ENCODE measurements at regions of chr3 and their contacts with region 1.

Region 1: GRCh38 chr3:10738688-10739372 is 77.2 kb upstream of the SLC6A11 start:
- DNase-seq: peak; percentile 64
- H3K4me3 ChIP-seq: no peak overlapping the region
- H3K27ac ChIP-seq: no peak overlapping the region
- H3K4me1 ChIP-seq: no peaks in the 10 kb centered on the region
- H3K27me3 ChIP-seq: no peaks in the 10 kb centered on the region
- CTCF ChIP-seq: peak; percentile 87

Region 2: DNA sequence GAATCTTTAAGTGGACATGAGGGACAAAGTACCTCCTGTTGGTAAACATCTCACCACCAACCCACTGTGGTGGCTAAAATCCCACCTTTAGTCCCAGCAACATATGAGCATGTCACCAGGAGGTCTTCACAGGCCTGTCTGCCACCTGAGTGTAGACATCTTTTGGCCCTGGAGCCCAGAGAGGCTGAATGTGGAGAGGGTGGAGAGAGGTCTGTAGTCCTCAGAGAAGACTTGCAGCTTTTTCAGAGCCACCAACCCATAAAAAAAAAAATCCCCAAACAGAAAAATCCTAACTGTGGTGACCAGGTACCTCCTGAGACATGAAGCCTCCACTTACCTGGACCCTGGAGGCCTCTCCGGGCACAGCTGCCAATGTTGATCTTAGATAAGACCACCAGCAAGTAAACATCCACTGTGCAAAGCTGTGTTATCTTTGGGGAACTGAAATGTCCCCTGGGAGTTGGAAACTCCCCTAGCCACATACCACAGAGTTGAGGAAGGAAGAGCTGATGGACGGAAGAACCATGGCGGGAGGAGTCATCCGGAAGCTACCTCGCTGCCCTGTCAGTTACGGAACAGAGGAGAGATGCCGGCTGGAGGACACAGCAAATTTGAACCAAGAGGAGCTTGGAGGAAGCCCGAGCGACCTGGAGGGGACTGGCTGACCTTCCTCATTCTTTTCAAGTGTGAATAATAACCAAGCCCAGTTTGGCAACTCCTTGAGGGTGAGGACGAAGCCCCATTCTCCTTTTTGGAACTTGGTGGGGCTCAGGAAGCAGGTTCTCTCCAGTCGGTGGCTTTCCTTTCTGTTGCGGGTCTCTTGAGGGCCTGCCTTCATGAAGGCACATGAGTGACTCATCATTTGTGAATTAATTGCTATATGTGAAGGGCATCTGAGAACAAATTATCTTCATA is 446.1 kb before region 1 on chr3 and contains the start of gene GHRL:
- intact Hi-C with region 1: no loop called
- DNase-seq: no peak
- H3K4me3 ChIP-seq: no peak within 1 kb of the TSS
- H3K27ac ChIP-seq: peak within 1 kb of the TSS; percentile 12
- H3K4me1 ChIP-seq: no peaks in the 10 kb centered on the region
- H3K27me3 ChIP-seq: no peaks in the 10 kb centered on the region
- CTCF ChIP-seq: no peak
- total RNA-seq, gene GHRL: 0.67 to 1.1 TPM

Region 3: DNA sequence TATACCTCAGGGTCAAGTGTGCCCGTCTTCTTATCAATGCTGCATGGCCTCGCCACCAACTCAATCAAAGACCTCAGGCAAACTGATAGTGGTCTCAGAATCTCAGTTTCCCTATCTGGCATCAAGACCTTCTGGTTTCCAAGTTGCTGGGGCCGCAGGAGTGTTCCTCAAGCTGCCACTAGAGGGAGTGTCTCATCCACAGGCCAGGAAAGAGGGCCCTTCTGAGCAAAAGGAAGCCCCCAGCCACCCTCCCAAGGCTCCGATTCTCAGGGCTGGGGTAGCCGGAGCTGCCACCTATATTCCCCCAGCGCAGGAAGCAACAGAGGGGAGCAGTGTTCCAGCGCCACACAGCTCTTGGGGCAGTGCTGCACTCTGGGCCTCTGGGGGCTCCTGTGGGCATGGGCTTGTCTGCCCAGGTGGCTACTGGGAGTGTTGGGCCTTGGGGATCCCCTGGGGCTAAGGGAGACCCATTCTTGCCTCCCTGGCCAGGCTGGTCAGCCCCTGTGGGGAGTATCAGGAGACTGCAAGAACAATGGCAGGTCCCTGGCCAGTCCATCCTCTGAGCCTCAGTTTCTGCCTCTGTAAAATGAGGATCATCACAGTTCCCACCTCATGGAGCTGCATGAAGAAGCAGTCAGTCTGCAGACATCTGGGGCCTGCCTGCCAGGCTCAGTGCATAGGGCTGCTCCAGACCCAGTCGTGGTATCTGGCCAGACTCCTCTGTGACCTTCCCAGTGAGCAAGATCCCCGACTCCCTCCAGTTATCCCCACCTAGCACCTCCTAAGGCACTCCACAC is 394.5 kb before region 1 on chr3:
- intact Hi-C with region 1: loop called (anchors 2 kb)
- DNase-seq: peak; percentile 34
- H3K4me3 ChIP-seq: no peak overlapping the region
- H3K27ac ChIP-seq: no peak overlapping the region
- H3K4me1 ChIP-seq: no peaks in the 10 kb centered on the region
- H3K27me3 ChIP-seq: no peaks in the 10 kb centered on the region
- CTCF ChIP-seq: peak; percentile 79